ENCODE measurements at regions of chr3 and their contacts with region 1.

Region 1: GRCh38 chr3:84547971-84548970 is 410.5 kb upstream of the CADM2 start:
- DNase-seq: no peak
- ATAC-seq: peak; percentile 99
- H3K4me3 ChIP-seq: no peak overlapping the region
- H3K27ac ChIP-seq: no peak overlapping the region
- H3K4me1 ChIP-seq: no peaks in the 10 kb centered on the region
- H3K27me3 ChIP-seq: no peaks in the 10 kb centered on the region
- CTCF ChIP-seq: peak; percentile 48 to 58 (median 49); a peak in 5 of 6 replicates
- EP300 ChIP-seq: no peak
- POLR2A ChIP-seq: no peak
- RAD21 ChIP-seq: peak; percentile 59

Region 2: GRCh38 chr3:84536916-84537315 is 11.4 kb before region 1 on chr3:
- CTCF ChIA-PET with region 1: interaction called, 18 read pairs
- POLR2A ChIA-PET with region 1: no interaction called
- RAD21 ChIA-PET with region 1: interaction called, 9 read pairs
- SMC1A ChIA-PET with region 1: interaction called, 17 read pairs
- in situ Hi-C with region 1: no loop called
- intact Hi-C with region 1: no loop called
- DNase-seq: no peak
- ATAC-seq: no peak
- H3K4me3 ChIP-seq: no peak overlapping the region
- H3K27ac ChIP-seq: no peak overlapping the region
- H3K4me1 ChIP-seq: no peaks in the 10 kb centered on the region
- H3K27me3 ChIP-seq: no peaks in the 10 kb centered on the region
- CTCF ChIP-seq: no peak
- EP300 ChIP-seq: no peak
- POLR2A ChIP-seq: no peak
- RAD21 ChIP-seq: no peak

Region 3: DNA sequence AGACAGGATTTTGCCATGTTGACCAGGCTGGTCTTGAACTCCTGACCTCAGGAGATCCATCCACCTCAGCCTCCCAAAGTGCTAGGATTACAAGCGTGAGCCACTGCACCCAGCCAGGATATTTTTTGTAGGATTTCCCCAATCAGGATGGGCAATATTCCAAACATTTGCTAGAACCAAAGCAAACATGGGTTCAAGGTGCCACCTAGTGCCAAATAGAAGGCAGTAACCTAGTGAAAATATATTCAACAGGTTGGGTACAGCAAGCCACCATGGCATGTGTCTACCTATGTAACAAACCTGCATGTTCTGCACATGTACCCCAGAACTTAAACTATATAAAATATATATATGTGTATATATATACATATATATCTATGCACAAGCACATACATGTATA is 224.6 kb after region 1 on chr3:
- CTCF ChIA-PET with region 1: interaction called, 80 read pairs
- POLR2A ChIA-PET with region 1: no interaction called
- RAD21 ChIA-PET with region 1: interaction called, 35 read pairs
- SMC1A ChIA-PET with region 1: interaction called, 52 read pairs
- in situ Hi-C with region 1: no loop called
- intact Hi-C with region 1: loop called (anchors 2 kb)
- DNase-seq: no peak
- ATAC-seq: peak; percentile 34; the same call in 1 of the 3 replicates
- H3K4me3 ChIP-seq: no peak overlapping the region
- H3K27ac ChIP-seq: no peak overlapping the region
- H3K4me1 ChIP-seq: no peaks in the 10 kb centered on the region
- H3K27me3 ChIP-seq: no peaks in the 10 kb centered on the region
- CTCF ChIP-seq: no peak; a peak in 1 of 6 replicates
- EP300 ChIP-seq: no peak
- POLR2A ChIP-seq: no peak
- RAD21 ChIP-seq: no peak

Region 4: GRCh38 chr3:85342915-85343314 is 794.6 kb after region 1 on chr3:
- CTCF ChIA-PET with region 1: no interaction called
- POLR2A ChIA-PET with region 1: no interaction called
- RAD21 ChIA-PET with region 1: no interaction called
- SMC1A ChIA-PET with region 1: interaction called, 3 read pairs
- in situ Hi-C with region 1: no loop called
- intact Hi-C with region 1: loop called (anchors 1 kb)
- DNase-seq: no peak
- ATAC-seq: peak; percentile 81
- H3K4me3 ChIP-seq: no peak overlapping the region
- H3K27ac ChIP-seq: no peak overlapping the region
- H3K4me1 ChIP-seq: no peaks in the 10 kb centered on the region
- H3K27me3 ChIP-seq: no peaks in the 10 kb centered on the region
- CTCF ChIP-seq: peak; percentile 43 to 49 (median 43); a peak in 3 of 6 replicates
- EP300 ChIP-seq: no peak
- POLR2A ChIP-seq: no peak
- RAD21 ChIP-seq: peak; percentile 37; the same call in 1 of the 2 replicates

Region 5: DNA sequence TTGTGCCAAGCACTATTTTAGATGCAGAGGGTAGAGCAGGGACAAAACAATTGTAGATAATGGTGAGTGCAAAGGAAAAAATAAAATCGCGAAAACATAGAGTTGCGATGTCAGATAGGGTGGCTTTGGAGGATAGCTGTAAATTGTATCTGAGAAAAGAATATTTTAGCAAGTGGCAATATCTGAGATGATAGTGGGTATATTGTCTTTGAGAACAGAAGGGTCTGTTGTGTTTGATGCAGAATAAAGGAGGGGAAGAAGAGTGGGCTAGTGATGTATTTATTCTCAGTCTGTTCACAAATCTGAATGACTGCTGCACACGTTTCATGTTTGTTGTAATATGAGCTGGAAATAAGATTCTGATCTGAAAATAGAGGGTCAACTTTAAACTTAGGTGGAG is 807.3 kb after region 1 on chr3:
- CTCF ChIA-PET with region 1: interaction called, 16 read pairs
- POLR2A ChIA-PET with region 1: no interaction called
- RAD21 ChIA-PET with region 1: interaction called, 3 read pairs
- SMC1A ChIA-PET with region 1: interaction called, 7 read pairs
- in situ Hi-C with region 1: loop called (anchors 5 kb)
- intact Hi-C with region 1: loop called (anchors 2 kb)
- DNase-seq: no peak
- ATAC-seq: no peak
- H3K4me3 ChIP-seq: no peak overlapping the region
- H3K27ac ChIP-seq: no peak overlapping the region
- H3K4me1 ChIP-seq: no peaks in the 10 kb centered on the region
- H3K27me3 ChIP-seq: no peaks in the 10 kb centered on the region
- CTCF ChIP-seq: no peak
- EP300 ChIP-seq: no peak
- POLR2A ChIP-seq: no peak
- RAD21 ChIP-seq: no peak

Region 6: GRCh38 chr3:85360742-85361387 is 812.6 kb after region 1 on chr3:
- CTCF ChIA-PET with region 1: interaction called, 16 read pairs
- POLR2A ChIA-PET with region 1: no interaction called
- RAD21 ChIA-PET with region 1: interaction called, 3 read pairs
- SMC1A ChIA-PET with region 1: interaction called, 7 read pairs
- in situ Hi-C with region 1: loop called (anchors 5 kb)
- intact Hi-C with region 1: loop called (anchors 2 kb)
- DNase-seq: peak; percentile 3
- ATAC-seq: peak; percentile 94
- H3K4me3 ChIP-seq: no peak overlapping the region
- H3K27ac ChIP-seq: no peak overlapping the region
- H3K4me1 ChIP-seq: no peaks in the 10 kb centered on the region
- H3K27me3 ChIP-seq: no peaks in the 10 kb centered on the region
- CTCF ChIP-seq: peak; percentile 47 to 68 (median 56)
- EP300 ChIP-seq: no peak
- POLR2A ChIP-seq: no peak
- RAD21 ChIP-seq: peak; percentile 59

Region 7: GRCh38 chr3:85576091-85576690 is 1027.9 kb after region 1 on chr3:
- CTCF ChIA-PET with region 1: interaction called, 30 read pairs
- POLR2A ChIA-PET with region 1: no interaction called
- RAD21 ChIA-PET with region 1: interaction called, 3 read pairs
- SMC1A ChIA-PET with region 1: interaction called, 7 read pairs
- in situ Hi-C with region 1: loop called (anchors 5 kb)
- intact Hi-C with region 1: loop called (anchors 1 kb)
- DNase-seq: no peak
- ATAC-seq: peak; percentile 79
- H3K4me3 ChIP-seq: no peak overlapping the region
- H3K27ac ChIP-seq: no peak overlapping the region
- H3K4me1 ChIP-seq: no peaks in the 10 kb centered on the region
- H3K27me3 ChIP-seq: no peaks in the 10 kb centered on the region
- CTCF ChIP-seq: peak; percentile 82 to 88 (median 84)
- EP300 ChIP-seq: no peak
- POLR2A ChIP-seq: no peak
- RAD21 ChIP-seq: peak; percentile 86

Measured in GM12878 (cell line).